ENCODE measurements at regions of chr13 and their contacts with region 1.

Region 1: DNA sequence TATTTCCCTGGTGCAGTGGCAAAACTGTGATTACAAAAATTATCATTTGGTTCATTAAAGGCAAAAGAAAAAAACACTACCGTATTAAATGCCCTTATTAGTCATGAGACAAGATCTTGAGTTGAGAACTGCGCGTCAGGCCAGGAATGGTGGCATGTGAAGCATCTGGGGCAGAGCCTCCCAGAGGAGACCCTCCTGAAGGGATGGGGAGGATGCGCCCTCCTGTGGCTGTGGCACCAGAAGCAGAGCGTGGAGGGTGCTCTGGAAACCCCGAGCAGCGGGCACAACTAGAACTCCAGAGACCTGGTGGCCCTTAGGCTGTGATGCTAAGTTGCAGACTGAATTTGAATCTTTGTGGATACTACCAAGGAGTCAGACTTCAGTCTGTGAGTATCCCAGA is 11.5 kb downstream of the CUL4A start:
- DNase-seq: peak; percentile 75
- ATAC-seq: peak; percentile 58

Region 2: DNA sequence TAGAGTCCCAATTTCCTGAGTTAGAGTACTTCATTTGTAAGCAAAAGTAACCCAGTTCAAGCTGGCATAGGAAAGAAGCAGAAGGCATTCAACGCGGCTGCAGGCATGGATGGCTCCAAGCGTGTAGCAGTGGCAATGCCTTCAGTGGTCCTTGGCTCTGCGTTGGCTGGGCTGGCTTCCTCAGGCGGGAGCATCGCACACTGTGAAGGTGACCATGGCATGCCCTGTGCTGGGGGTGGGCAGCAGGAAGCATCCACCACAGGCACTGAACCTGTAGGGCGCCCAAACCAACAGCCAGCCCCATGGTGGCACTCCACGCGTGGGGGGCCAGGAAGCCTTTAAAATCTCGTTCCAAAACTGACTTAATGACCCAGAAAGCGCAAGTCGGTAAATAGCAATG is 898.3 kb before region 1 on chr13:
- intact Hi-C with region 1: no loop called
- DNase-seq: no peak
- ATAC-seq: no peak

Region 3: GRCh38 chr13:113034451-113035208 is 186.2 kb before region 1 on chr13:
- intact Hi-C with region 1: loop called (anchors 5 kb)
- DNase-seq: no peak
- ATAC-seq: peak; percentile 78

Region 4: GRCh38 chr13:113647351-113648215 is 426.7 kb after region 1 on chr13:
- intact Hi-C with region 1: no loop called
- DNase-seq: peak; percentile 91
- ATAC-seq: peak; percentile 95